Endothelial cell of umbilical vein (primary cell): ENCODE measurements at regions of chr7 and their contacts with region 1.

Region 1: DNA sequence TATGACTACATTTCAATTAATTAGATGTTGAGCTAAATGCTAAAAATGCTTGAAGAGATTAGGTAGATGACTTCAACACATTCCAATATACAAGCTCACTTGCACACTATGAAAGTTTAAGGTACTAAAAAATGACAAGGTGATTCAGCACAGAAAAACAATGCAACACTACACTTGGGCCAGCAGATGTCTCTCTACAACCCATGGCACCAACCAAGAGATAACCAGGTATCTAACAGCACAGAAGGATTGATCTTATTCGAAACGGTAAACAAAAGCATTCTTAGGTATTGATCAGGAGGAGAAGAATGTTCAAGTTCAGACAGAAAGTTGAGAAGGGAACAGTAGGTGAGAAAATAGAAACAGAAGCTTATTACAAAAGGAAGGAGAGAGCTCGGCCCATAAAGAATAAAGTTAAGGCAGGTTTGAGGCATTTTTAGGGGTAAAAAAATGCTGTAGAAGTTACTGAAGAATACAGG is 248.2 kb upstream of the KLF14 start:
- DNase-seq: peak; percentile 54
- H3K4me3 ChIP-seq: no peak overlapping the region
- H3K27ac ChIP-seq: no peak overlapping the region
- H3K4me1 ChIP-seq: no peaks in the 10 kb centered on the region
- H3K27me3 ChIP-seq: no peaks in the 10 kb centered on the region
- CTCF ChIP-seq: peak; percentile 48 to 62
- POLR2A ChIP-seq: no peak

Region 2: GRCh38 chr7:130921391-130922180 is 60.6 kb before region 1 on chr7:
- CTCF ChIA-PET with region 1: interaction called, 15 read pairs
- POLR2A ChIA-PET with region 1: no interaction called
- dilution Hi-C with region 1: no loop called
- intact Hi-C with region 1: no loop called
- DNase-seq: peak; percentile 91
- H3K4me3 ChIP-seq: peak overlapping the region in 2 of 3 experiments; percentile 9 to 25
- H3K27ac ChIP-seq: peak overlapping the region; percentile 90
- H3K4me1 ChIP-seq: peaks cover 49% of the 10 kb centered on the region
- H3K27me3 ChIP-seq: no peaks in the 10 kb centered on the region
- CTCF ChIP-seq: peak in 1 of 2 donors; percentile 4
- POLR2A ChIP-seq: peak; percentile 50

Region 3: GRCh38 chr7:130961128-130961601 is 21.0 kb before region 1 on chr7:
- CTCF ChIA-PET with region 1: interaction called, 11 read pairs
- POLR2A ChIA-PET with region 1: no interaction called
- dilution Hi-C with region 1: no loop called
- intact Hi-C with region 1: no loop called
- DNase-seq: no peak
- H3K4me3 ChIP-seq: no peak overlapping the region
- H3K27ac ChIP-seq: peak overlapping the region; percentile 42
- H3K4me1 ChIP-seq: peaks cover 21% of the 10 kb centered on the region
- H3K27me3 ChIP-seq: no peaks in the 10 kb centered on the region
- CTCF ChIP-seq: no peak
- POLR2A ChIP-seq: no peak

Region 4: DNA sequence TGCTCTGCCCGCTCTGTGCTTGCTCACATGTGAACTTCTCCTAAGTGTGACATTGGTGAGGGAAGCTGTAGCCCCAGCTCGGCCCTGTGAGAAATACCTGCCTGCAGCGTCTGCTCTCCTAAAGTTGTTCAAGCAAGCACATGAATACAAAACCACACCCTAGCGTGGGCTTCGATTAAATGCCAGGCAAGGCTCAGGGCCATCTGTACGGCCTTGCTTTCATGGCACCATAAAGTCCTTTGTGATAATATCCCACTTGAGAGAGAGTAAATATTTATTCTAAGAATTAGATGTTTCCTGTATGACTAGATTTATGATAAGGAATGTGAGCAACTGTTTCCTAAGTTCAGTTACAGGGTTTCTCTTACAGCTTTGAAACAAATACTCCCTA is 14.6 kb after region 1 on chr7:
- CTCF ChIA-PET with region 1: interaction called, 23 read pairs
- POLR2A ChIA-PET with region 1: no interaction called
- dilution Hi-C with region 1: no loop called
- intact Hi-C with region 1: no loop called
- DNase-seq: peak; percentile 78
- H3K4me3 ChIP-seq: no peak overlapping the region
- H3K27ac ChIP-seq: no peak overlapping the region
- H3K4me1 ChIP-seq: peaks cover 14% of the 10 kb centered on the region
- H3K27me3 ChIP-seq: peaks cover 14 to 26% of the 10 kb centered on the region in 2 experiments
- CTCF ChIP-seq: no peak
- POLR2A ChIP-seq: no peak

Region 5: DNA sequence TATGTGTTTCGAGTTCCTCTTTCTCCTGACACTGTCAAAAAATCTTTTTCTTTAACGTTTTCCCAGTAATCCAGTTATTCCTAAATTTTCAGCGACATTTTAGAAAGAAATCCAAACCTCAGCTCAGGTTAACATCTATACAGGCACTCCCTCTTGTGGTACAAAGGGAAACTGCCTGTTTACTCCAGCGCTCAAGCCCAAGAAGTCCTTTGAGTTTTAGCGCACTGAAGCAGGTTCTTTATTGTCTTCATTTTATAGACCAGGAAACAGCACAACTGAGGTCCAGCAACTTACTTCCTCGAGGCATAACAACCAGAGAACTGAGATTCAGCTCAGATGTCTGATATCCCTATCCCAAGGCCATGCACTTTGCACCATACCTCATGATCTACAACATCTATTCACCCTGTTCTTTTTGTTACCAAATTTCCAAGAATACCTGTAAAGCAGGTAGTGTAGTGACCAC is 58.3 kb after region 1 on chr7:
- CTCF ChIA-PET with region 1: interaction called, 37 read pairs
- POLR2A ChIA-PET with region 1: no interaction called
- dilution Hi-C with region 1: no loop called
- intact Hi-C with region 1: loop called (anchors 1 kb)
- DNase-seq: peak; percentile 82
- H3K4me3 ChIP-seq: no peak overlapping the region
- H3K27ac ChIP-seq: no peak overlapping the region
- H3K4me1 ChIP-seq: peaks cover 9% of the 10 kb centered on the region
- H3K27me3 ChIP-seq: no peaks in the 10 kb centered on the region
- CTCF ChIP-seq: peak; percentile 81 to 83
- POLR2A ChIP-seq: no peak